ENCODE measurements at regions of chr19 and their contacts with region 1.

Region 1: GRCh38 chr19:45886427-45887199 is 672 bp upstream of the IRF2BP1 start:
- DNase-seq: peak; percentile 95
- H3K4me3 ChIP-seq: peak overlapping the region; percentile 54 to 74 (median 61)
- H3K27ac ChIP-seq: peak overlapping the region; percentile 73
- H3K4me1 ChIP-seq: peaks cover 32% of the 10 kb centered on the region
- H3K27me3 ChIP-seq: no peaks in the 10 kb centered on the region
- CTCF ChIP-seq: no peak

Region 2: GRCh38 chr19:45717166-45717982 is 169.2 kb before region 1 on chr19:
- CTCF ChIA-PET with region 1: no interaction called
- dilution Hi-C with region 1: no loop called
- in situ Hi-C with region 1: no loop called
- intact Hi-C with region 1: loop called (anchors 5 kb)
- DNase-seq: peak; percentile 97
- H3K4me3 ChIP-seq: peak overlapping the region; percentile 64 to 91 (median 65)
- H3K27ac ChIP-seq: peak overlapping the region; percentile 87
- H3K4me1 ChIP-seq: peaks cover 23% of the 10 kb centered on the region
- H3K27me3 ChIP-seq: no peaks in the 10 kb centered on the region
- CTCF ChIP-seq: peak; percentile 5 to 29

Region 3: DNA sequence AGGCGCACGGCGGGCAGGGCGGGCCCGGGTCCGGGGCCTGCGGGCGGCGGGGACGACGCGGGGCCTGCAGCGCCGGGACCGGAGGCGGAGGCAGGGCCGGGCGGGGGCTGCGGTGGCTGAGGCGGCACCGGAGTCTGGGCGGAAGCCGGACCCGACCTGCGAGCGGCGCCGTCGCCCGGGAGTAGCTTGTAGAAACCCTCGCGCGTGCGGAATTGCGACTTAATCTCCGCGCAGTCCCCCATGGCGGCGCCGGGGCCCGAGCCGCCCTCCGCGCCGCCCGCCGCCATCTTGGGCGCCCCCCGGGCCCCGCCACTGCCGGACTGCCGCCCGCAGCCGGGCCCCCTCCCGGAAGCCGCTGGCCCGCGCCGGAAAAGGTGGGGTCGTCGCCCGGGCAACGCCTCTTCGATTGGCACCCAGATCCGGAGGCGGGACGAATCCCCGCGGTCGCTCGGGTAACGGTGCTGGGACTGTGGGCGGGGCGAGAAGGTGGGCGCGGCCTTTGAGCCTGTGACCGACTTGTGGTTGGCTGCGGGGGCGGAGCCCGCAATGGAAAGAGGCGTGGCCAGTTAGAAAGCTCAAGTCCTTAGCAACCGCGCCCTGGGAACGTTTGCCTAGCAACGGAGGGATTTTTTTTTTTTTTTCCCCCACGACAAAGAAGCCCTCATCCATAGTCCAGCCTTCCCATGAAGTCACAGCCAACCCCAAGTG is 94.0 kb before region 1 on chr19 and contains the start of gene DMWD:
- CTCF ChIA-PET with region 1: no interaction called
- dilution Hi-C with region 1: no loop called
- in situ Hi-C with region 1: no loop called
- intact Hi-C with region 1: no loop called
- DNase-seq: peak; percentile 97
- H3K4me3 ChIP-seq: peak within 1 kb of the TSS; percentile 47 to 94 (median 83)
- H3K27ac ChIP-seq: peak within 1 kb of the TSS; percentile 67
- H3K4me1 ChIP-seq: peaks cover 12% of the 10 kb centered on the region
- H3K27me3 ChIP-seq: no peaks in the 10 kb centered on the region
- CTCF ChIP-seq: no peak
- total RNA-seq, gene DMWD: 40.0 to 56.7 TPM

Region 4: DNA sequence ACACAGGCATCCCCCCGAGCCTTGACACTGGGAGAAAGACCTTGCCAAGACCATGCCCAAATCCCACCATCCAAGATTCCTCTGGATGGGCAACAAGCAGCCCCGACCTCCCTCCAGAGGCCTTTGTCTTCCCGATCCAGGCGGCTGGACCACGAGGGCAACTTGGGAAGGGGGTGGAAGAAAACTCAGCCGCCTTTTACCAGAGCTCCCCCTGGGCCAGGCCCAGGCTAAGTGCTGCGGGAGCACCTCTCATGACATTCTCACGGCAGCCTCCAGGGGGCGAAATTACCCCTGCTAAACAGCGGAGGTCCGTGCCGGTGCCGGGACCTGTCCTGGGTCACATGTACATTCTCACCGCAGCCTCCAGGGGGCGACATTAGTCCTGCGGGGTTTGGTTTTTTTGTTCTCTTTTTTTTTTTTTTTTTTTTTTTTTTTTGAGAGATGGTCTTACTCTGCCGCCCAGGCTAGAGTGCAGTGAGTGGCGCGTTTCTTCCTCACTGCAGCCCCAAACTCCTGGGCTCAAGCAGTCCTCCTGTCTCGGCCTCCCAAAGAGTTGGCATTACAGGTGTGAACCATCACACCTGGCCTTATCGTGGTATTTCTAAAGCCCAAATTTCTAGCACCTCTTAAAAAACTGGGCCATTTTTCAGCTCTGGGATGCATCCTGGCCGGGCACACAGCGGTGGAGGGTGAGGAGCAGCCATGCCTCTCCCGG is 69.4 kb before region 1 on chr19:
- CTCF ChIA-PET with region 1: interaction called, 3 read pairs
- dilution Hi-C with region 1: no loop called
- in situ Hi-C with region 1: no loop called
- intact Hi-C with region 1: loop called (anchors 1 kb)
- DNase-seq: peak; percentile 75
- H3K4me3 ChIP-seq: no peak overlapping the region
- H3K27ac ChIP-seq: no peak overlapping the region
- H3K4me1 ChIP-seq: peaks cover 14% of the 10 kb centered on the region
- H3K27me3 ChIP-seq: no peaks in the 10 kb centered on the region
- CTCF ChIP-seq: peak; percentile 96 to 98

Region 5: DNA sequence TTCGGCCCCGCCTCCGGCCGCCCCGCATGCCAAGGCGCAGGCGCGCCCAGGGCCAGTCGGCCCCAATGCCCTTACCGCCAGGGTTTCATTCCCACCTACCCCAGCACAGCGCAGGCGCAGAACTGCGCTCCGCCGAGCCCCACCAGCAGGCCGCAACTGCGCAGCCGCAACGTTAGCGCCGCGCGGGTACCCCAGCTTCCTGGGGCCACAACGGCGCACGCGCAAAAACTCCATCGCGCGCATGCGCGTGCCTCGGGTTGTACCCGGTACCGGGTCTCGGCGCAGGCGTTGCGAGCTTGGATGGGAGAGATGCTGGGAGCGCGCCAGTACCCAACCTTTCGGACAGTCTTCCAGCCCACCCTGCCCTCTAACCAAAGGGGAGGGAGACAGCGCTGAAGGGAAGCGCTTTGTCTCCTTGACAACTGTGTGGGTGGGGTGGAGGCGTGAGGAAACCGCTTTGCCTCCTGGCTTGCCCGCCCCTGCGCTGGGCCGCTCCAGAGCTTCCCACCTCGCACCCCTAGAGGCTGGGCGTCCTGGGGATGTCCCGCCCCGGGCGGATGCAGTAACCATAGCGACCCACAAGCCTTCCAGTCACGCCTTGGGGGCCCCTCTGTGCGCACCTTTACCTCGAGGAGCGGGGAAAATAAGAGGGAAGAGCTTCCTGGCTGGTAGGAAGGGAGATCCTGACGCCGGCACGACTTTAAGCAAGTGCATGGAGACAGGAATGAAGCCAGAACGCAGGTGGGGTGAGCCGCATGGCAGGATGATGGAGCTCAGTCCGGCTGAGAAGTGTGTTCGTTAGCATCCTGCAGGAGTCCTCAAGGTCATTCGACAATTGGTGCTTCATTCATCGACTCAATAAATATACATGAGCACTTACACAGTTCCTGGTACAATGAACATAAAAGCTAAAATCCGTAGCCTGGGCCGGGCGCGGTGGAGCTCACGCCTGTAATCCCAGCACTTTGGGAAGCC is 16.3 kb after region 1 on chr19:
- CTCF ChIA-PET with region 1: no interaction called
- dilution Hi-C with region 1: no loop called
- in situ Hi-C with region 1: no loop called
- intact Hi-C with region 1: loop called (anchors 1 kb)
- DNase-seq: peak; percentile 98
- H3K4me3 ChIP-seq: peak overlapping the region; percentile 66 to 71 (median 68)
- H3K27ac ChIP-seq: no peak overlapping the region
- H3K4me1 ChIP-seq: peaks cover 13% of the 10 kb centered on the region
- H3K27me3 ChIP-seq: no peaks in the 10 kb centered on the region
- CTCF ChIP-seq: no peak

Region 6: DNA sequence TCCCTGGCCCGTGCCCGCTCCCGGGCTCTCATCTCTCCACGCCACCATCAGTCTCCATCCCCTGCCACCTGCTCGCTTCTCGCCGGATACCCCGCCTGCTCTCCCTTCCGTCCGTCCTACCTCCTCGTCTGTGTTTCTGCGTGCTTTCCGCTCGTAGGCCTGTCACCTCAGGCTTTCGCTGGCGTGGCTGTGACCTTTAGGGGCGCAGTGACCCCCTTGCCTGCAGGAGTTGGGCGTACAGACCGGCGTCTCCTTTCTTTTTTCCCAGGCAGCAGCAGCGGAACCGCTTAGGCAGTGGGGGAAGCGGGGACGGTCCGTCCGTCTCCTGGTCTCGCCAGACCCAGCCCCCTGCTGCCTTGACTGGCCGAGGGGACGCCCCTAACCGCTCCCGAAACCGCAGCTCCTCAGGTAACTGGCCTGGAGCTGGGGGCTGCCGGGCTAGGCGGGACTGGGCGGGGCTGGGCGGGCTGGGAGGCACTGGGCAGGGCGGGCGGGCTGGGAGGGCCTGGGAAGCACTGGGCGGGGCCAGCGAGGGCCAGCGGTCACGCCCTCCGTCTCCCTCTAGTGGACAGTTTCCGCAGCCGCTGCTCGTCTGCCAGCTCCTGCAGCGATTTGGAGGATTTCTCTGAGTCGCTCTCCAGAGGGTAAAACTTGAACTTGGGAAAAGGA is 129.9 kb after region 1 on chr19:
- CTCF ChIA-PET with region 1: no interaction called
- dilution Hi-C with region 1: no loop called
- in situ Hi-C with region 1: no loop called
- intact Hi-C with region 1: loop called (anchors 2 kb)
- DNase-seq: peak; percentile 76
- H3K4me3 ChIP-seq: peak overlapping the region; percentile 31 to 59 (median 56)
- H3K27ac ChIP-seq: no peak overlapping the region
- H3K4me1 ChIP-seq: peaks cover 37% of the 10 kb centered on the region
- H3K27me3 ChIP-seq: no peaks in the 10 kb centered on the region
- CTCF ChIP-seq: peak; percentile 68 to 79